ENCODE measurements at regions of chr1 and their contacts with region 1.

Region 1: DNA sequence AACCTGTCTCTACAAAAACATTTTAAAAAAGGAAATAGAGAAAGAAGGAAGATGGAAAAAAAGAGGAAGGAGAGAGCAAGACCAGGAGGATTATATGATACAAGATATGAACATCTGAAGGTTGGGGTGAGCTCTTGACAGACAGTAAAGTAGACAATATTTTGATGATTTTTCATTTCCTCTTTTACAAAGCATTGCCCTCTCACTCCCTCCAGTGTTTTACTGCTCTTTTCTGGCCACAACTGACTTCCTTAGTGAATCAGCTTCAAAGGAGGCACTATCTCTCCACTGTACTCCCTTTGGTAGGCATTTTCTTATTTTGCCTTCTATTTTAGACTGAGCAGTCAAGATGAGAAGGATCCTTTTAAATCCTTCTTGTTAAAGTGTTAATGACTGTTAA is 296.7 kb downstream of the KCTD3 start:
- DNase-seq: no peak

Region 2: DNA sequence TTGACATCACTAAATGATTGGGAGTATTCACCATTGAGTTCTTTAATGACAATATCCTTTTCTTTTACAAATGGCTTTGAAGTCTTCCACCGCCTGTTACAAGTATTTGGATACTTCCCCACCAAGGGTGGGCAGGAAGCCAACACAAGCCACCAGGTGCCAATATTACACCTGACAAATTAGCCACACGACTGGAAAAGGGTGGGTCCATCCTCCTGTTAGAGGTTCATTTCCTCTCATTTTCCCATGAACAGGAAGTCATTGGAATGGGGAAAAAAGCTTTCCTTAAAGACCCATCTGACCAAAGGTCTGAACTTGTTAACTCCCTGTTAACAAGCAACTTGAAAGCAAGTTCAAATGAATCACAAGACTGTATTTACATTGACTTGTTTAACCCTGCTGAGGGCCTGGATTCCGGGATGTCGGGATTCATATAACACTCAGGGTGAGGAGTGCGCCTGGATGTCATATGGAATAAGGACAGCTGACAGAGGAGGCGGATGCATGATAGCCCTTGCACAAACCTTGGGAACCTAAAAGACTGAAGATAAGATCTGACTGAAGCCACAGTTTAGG is 1916.5 kb before region 1 on chr1:
- intact Hi-C with region 1: no loop called
- DNase-seq: no peak

Region 3: GRCh38 chr1:215932558-215932957 is 68.8 kb after region 1 on chr1:
- intact Hi-C with region 1: loop called in 1 of 2 experiments (anchors 2 kb)
- DNase-seq: no peak

Region 4: GRCh38 chr1:216020743-216021345 is 157.0 kb after region 1 on chr1:
- intact Hi-C with region 1: no loop called
- DNase-seq: no peak